Activated naive CD4-positive, alpha-beta T cell treated with anti-CD3 and anti-CD28 coated beads for 36 hours (primary cell): ENCODE measurements at regions of chr5 and their contacts with region 1.

Region 1: GRCh38 chr5:150560401-150561193 is 52.7 kb downstream of the NDST1 start:
- DNase-seq: peak; percentile 96
- H3K4me3 Mint-ChIP-seq: no peak overlapping the region
- H3K27ac Mint-ChIP-seq: no peak overlapping the region
- H3K4me1 Mint-ChIP-seq: no peaks in the 10 kb centered on the region
- H3K27me3 Mint-ChIP-seq: no peaks in the 10 kb centered on the region

Region 2: DNA sequence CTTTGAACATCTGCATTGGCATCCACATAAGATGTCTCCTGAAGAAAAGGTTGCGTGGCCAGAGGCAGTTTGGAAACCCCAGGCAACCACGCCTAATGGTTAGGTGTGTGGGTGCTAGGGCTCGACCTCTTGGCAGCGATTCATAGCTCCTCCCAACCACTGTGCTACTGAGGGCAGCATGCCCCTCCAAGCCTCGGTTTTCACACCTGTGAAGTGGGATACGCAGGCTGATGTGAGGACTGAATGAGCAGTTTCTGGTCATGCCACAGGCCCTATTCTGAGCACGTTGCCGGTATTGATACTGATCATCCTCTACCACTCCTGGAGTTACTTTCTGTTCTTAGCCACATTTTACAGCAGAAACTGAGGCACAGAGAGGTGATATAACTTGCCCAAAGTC is 33.6 kb before region 1 on chr5:
- CTCF ChIA-PET with region 1: no interaction called
- intact Hi-C with region 1: no loop called
- DNase-seq: no peak
- H3K4me3 Mint-ChIP-seq: no peak overlapping the region
- H3K27ac Mint-ChIP-seq: no peak overlapping the region
- H3K4me1 Mint-ChIP-seq: no peaks in the 10 kb centered on the region
- H3K27me3 Mint-ChIP-seq: no peaks in the 10 kb centered on the region

Region 3: DNA sequence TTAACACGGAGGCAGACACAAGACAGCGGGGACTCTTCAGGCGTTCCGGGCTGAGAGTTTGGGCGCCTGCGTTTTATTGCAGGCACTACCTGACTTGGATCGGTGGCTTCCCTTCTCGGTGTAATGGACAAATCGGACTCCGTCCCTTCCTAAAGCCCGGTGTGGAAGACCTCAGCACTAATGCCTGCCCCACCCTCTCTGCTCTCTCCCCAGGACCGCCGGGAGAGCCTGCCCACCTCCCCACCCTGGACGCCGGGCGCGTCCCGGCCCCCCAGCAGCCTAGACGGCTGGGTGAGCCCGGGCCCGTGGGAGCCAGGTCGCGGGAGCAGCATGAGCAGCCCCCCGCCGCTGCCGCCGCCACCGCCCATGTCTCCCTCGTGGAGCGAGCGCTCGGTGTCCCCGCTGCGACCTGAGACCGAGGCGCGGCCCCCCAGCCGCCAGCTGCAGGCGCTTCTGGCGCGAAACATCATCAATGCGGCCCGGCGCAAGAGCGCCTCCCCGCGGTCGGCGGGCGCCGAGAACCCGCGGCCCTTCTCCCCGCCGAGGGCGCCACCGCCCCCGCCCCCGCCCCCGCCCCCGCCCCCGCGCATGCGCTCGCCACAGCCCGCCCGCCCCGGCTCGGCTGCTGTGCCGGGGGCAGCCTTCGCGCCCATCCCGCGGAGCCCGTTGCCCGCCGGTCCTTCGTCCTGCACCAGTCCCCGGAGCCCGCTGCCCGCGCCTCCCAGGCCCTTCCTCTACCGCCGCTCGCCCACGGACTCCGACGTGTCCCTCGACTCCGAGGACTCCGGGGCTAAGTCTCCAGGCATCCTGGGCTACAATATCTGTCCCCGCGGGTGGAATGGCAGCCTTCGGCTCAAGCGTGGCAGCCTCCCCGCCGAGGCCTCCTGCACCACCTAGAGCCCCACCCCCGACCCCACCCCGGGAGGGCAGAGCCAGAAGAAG is 95.9 kb after region 1 on chr5:
- CTCF ChIA-PET with region 1: interaction called, 41 read pairs
- intact Hi-C with region 1: loop called (anchors 1 kb)
- DNase-seq: peak; percentile 77
- H3K4me3 Mint-ChIP-seq: peak overlapping the region; percentile 76
- H3K27ac Mint-ChIP-seq: no peak overlapping the region
- H3K4me1 Mint-ChIP-seq: peaks cover 2% of the 10 kb centered on the region
- H3K27me3 Mint-ChIP-seq: no peaks in the 10 kb centered on the region

Region 4: GRCh38 chr5:150989695-150990094 is 429.1 kb after region 1 on chr5:
- CTCF ChIA-PET with region 1: no interaction called
- intact Hi-C with region 1: loop called (anchors 1 kb)
- DNase-seq: peak; percentile 53
- H3K4me3 Mint-ChIP-seq: no peak overlapping the region
- H3K27ac Mint-ChIP-seq: no peak overlapping the region
- H3K4me1 Mint-ChIP-seq: no peaks in the 10 kb centered on the region
- H3K27me3 Mint-ChIP-seq: no peaks in the 10 kb centered on the region